AG04449 (cell line): ENCODE measurements at regions of chr16 and their contacts with region 1.

Region 1: DNA sequence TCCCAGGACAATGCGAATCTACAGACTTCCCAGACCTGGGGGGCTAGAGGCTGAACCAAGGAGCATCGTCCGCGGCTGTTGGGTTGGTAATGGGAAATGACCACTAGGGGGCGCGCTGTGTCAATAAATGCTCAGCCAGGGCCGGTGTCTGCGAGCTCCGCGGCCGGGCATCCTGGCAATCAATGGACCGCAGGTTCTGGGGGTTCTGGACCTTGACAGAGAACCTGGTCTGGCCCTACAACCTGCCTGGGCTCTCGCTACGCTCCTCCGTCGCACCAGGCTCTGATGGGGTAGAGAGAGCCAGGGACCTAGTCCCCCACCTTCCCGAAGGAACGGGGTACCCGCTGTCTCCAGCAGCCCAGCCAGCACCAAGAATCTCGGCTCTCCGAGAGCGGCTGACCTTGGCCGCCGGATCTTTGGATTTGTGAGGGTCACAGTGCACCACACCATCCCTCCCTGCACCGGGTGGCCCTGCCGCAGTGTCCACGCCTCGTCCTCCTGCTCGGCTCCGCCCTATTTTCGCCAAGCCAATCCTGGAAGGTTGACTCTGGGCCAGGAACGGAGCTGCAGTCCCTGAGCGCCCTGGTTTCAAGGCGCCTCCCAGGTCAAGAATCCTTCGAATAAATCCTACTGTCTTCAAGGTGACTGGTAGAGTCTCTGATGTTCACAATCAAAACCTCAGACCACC is 20.4 kb upstream of the BEAN1 start:
- DNase-seq: no peak
- H3K4me3 ChIP-seq: peak overlapping the region; percentile 68
- CTCF ChIP-seq: peak; percentile 81

Region 2: DNA sequence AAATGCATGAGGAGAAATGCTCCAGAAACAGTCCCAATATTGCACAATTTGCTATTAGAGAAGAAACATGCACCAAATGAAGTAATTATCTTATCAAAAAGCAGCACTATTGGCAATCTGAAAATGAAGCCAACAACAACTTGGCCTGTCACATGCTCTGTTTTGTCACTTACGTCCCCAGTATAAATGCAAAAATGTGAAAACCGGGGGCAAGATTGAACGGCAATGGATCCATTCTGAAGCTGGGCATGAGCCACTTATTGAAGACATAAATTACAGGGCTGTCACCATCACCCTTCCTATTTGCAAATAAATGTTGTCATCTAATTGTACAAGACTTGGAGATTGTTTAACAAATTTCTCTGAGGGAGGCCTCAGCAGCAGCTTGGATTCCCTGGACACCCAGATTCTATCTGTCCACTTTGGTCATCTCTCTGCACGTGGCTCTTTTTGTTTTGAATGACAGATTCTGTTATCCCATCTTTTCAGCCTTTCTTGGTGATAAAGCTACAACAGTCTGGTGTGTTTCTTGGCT is 220.4 kb before region 1 on chr16:
- CTCF ChIA-PET with region 1: no interaction called
- POLR2A ChIA-PET with region 1: no interaction called
- DNase-seq: no peak
- H3K4me3 ChIP-seq: no peak overlapping the region
- CTCF ChIP-seq: no peak

Region 3: GRCh38 chr16:66386629-66387622 is 19.8 kb before region 1 on chr16:
- CTCF ChIA-PET with region 1: interaction called, 21 read pairs
- POLR2A ChIA-PET with region 1: no interaction called
- DNase-seq: no peak
- H3K4me3 ChIP-seq: no peak overlapping the region
- CTCF ChIP-seq: no peak

Region 4: DNA sequence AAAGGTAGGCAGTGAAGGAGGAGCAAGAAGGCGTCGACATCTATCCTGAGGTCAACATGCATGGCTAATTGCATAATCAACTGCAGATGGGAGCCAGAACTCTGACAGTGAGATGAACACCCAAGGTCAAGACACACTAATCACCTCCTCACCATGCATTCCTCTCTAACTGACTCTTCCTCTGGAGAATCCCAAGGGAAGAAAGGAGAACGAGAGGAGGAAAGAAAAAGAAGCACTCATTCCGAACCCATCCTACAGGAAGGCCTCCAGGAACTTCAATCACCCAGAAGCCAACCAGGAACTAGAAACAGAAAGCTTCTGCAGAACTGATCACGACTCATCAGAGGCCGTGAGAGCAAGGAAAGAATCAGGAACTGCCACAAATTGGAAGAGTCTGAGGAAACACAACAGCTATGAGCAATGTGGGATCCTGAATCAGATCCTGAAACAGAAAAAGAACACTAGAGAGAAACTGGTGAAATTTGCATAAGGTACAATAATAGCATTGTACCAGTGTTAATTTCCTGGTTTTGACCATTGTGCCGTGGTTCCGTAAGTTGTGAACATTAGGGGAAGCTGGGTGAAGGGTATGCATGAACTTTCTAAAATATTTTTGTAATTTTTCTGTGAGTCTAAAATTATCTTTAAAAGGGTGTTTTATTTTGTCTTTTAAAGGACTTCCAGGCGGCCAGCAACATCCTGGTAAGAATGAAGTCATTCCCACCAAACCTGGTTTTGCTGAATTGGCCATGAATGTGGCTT is 10.4 kb after region 1 on chr16:
- CTCF ChIA-PET with region 1: interaction called, 20 read pairs
- POLR2A ChIA-PET with region 1: interaction called, 3 read pairs
- DNase-seq: no peak
- H3K4me3 ChIP-seq: no peak overlapping the region
- CTCF ChIP-seq: no peak

Region 5: GRCh38 chr16:66483689-66484481 is 77.2 kb after region 1 on chr16:
- CTCF ChIA-PET with region 1: interaction called, 273 read pairs
- POLR2A ChIA-PET with region 1: no interaction called
- DNase-seq: no peak
- H3K4me3 ChIP-seq: no peak overlapping the region
- CTCF ChIP-seq: peak; percentile 99

Region 6: DNA sequence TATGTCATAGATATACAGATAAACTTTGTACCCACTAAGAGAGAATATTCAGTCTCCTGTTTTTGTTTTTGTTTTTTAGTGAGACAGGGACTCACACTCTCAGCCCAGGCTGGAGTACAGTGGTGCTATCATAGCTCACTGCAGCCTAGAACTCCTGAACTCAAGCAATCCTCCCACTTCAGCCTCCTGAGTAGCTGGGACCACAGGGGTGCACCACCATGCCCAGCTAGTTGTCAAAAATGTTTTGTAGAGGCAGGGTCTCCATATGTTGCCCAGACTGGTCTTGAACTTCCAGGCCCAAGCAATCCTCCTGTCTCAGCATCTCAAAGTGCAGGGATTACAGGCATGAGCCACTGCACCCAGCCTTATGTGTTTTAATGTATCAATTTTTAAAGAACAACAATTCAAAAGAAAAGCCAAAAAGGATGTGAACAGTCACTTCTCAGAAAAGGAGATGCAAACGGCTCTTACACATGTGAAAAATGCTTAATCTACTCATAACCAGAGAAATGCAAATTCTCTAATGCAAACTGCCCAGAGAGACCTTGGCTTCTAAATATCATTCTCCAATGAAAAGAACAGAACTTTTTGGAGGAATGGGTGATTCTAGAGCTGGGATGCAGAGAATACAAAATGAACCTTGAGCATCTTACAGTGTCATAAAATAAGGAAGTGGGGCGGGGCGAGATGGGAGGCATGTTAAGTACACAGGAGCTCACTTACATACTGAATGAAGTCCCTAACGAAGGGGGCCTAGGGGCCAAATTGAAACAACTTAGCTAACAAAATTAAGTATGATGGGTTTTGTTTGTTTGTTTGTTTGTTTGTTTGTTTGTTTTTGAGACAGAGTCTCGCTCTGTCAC is 190.5 kb after region 1 on chr16:
- CTCF ChIA-PET with region 1: interaction called, 12 read pairs
- POLR2A ChIA-PET with region 1: no interaction called
- DNase-seq: no peak
- H3K4me3 ChIP-seq: no peak overlapping the region
- CTCF ChIP-seq: no peak

Region 7: DNA sequence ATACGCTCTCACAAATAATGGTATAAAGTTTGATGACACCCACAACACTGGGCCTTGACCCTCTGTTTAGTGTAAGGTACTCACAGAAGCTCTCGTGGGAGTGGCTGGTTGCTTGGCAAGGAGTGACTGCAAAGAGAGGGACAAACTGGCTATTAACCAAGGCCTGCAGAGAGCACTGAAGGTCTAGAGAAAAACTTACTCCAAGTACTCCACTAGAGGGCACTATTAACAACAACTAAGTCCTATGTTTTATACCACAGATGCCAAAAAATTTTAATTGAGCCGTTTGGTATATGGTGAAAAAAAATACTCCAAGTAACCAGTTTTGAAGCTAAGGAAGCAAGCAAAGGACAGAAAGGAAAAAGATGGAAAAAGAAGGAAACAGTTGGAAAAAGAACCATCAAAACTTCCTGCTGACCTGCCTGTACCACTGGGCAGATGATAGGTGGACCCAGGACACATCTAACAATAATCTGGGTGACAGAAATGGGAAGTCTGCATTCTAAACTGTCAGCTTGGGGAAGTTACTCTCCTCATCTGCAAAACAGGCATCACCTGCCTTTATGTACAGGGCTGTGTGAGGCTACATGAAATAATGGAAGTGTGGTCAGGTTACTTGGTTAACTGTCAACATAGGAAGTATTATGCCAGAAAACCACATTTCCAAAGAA is 321.6 kb after region 1 on chr16:
- CTCF ChIA-PET with region 1: interaction called, 20 read pairs
- POLR2A ChIA-PET with region 1: no interaction called
- DNase-seq: no peak
- H3K4me3 ChIP-seq: no peak overlapping the region
- CTCF ChIP-seq: peak; percentile 51